BJ (cell line): ENCODE measurements at regions of chr6 and their contacts with region 1.

Region 1: GRCh38 chr6:134097114-134097707 is 44.8 kb upstream of the SLC2A12 start:
- DNase-seq: no peak
- H3K4me3 ChIP-seq: no peak overlapping the region
- H3K27me3 ChIP-seq: peaks cover 6% of the 10 kb centered on the region
- CTCF ChIP-seq: peak; percentile 54

Region 2: GRCh38 chr6:133568970-133569889 is 528.0 kb before region 1 on chr6:
- CTCF ChIA-PET with region 1: interaction called, 17 read pairs
- POLR2A ChIA-PET with region 1: interaction called, 11 read pairs
- DNase-seq: peak; percentile 28
- H3K4me3 ChIP-seq: peak overlapping the region; percentile 29
- H3K27me3 ChIP-seq: no peaks in the 10 kb centered on the region
- CTCF ChIP-seq: peak; percentile 97

Region 3: GRCh38 chr6:133916650-133917151 is 180.5 kb before region 1 on chr6:
- CTCF ChIA-PET with region 1: interaction called, 337 read pairs
- POLR2A ChIA-PET with region 1: no interaction called
- DNase-seq: peak; percentile 31
- H3K4me3 ChIP-seq: no peak overlapping the region
- H3K27me3 ChIP-seq: no peaks in the 10 kb centered on the region
- CTCF ChIP-seq: peak; percentile 93

Region 4: DNA sequence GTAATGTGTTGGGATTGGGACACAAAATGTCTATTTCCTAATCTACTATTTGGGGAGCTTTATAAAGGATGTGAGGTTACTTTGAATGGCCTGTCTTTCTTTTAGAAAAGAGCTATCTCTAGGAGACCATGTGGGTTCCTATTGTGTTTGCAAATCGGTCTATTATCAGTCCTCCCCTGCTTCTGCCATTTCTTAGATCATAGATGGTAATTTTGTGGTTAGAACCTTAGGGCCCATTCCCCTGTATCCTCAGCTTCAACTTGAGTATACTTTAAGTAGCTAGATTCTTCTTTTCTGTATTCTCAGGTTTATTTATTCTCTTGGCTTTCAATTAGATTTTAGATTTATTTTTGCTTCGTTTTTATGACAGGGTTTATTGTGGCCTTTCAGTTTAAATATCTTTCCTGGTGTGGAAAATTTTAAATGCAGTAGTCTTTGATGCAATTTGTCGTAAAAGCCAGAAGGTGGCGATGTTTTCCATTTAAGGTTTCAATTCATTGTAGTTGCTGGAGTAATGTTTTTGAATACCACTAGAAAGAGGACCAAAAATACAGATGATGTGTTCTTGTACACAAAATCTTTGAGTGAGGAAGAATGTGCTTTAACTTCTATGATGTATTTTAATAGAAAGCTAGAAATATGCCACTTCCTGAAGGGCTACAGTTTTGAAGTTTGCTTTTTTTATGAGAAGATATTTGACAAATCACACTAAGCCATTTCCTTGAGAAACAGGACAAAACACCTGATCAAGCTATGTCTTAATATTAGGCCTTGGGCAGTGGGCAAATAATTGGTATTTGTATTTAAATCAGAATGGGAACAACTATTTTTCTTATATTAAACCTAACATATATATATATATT is 123.9 kb before region 1 on chr6:
- CTCF ChIA-PET with region 1: interaction called, 21 read pairs
- POLR2A ChIA-PET with region 1: no interaction called
- DNase-seq: no peak
- H3K4me3 ChIP-seq: no peak overlapping the region
- H3K27me3 ChIP-seq: no peaks in the 10 kb centered on the region
- CTCF ChIP-seq: peak; percentile 62

Region 5: DNA sequence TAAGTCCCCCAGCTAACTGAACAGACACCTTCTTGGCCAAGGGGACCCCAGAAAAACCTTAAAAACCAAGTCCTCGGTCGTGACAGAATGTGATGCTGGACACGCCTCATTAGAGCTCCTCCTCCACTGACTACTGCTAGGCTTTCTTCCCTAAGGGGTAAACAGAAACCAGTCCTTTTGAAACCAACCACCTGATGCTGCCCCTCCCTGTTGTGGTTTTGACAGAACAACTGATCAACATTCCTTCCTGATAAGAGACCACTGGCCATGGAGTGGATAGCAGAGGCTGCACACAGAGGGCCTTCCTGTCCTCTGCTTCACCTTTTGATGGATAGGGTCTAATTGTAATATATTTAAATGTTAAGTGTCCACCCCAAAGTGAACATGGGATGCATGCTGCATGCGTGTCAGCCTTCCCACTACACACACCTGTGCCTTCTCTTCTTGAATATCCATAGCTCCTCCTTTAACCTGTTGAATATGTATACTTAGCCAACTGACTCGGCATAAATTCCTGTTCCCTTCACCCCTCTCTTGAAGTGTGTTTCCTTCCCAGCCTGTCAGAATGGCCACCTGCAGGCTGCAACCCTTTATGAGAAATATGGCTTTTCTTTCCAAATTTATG is 16.9 kb before region 1 on chr6:
- CTCF ChIA-PET with region 1: interaction called, 10 read pairs
- POLR2A ChIA-PET with region 1: no interaction called
- DNase-seq: no peak
- H3K4me3 ChIP-seq: no peak overlapping the region
- H3K27me3 ChIP-seq: no peaks in the 10 kb centered on the region
- CTCF ChIP-seq: no peak

Region 6: GRCh38 chr6:134111062-134111677 is 14.0 kb after region 1 on chr6:
- CTCF ChIA-PET with region 1: interaction called, 20 read pairs
- POLR2A ChIA-PET with region 1: no interaction called
- DNase-seq: no peak
- H3K4me3 ChIP-seq: no peak overlapping the region
- H3K27me3 ChIP-seq: peaks cover 2% of the 10 kb centered on the region; the same call in 1 of the 2 replicates
- CTCF ChIP-seq: peak; percentile 80